ENCODE measurements at regions of chr4 and their contacts with region 1.

Region 1: DNA sequence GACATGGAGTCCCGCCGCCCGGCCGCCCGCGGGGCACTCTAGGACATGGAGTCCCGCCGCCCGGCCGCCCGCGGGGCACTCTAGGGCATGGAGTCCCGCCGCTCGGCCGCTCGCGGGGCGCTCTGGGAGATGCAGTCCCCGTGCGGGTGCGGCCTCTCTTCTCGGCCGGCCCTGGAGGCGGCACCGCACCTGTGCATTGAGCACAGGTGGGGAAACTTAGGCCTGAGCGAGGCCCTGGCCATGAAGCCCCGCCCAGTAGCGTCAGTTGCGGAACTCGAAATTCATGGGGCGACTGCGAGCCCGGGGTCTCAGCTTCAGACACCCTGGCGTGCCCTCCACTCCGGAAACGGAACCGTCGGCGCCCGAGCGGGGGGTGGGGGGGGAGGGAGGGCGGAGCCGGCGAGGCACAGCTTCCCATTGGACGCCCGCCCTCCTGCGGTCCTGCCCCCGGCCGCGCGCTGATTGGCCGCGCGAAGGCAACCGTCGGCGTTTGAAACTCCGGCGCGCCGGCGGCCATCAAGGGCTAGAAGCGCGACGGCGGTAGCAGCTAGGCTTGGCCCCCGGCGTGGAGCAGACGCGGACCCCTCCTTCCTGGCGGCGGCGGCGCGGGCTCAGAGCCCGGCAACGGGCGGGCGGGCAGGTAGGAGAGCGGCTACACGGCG is at the starts of genes TACC3 and TMEM129:
- DNase-seq: peak; percentile 98
- H3K4me3 Mint-ChIP-seq: peak within 1 kb of the TSS; percentile 98
- H3K27ac Mint-ChIP-seq: peak within 1 kb of the TSS; percentile 99
- H3K4me1 Mint-ChIP-seq: peaks cover 40% of the 10 kb centered on the region
- H3K27me3 Mint-ChIP-seq: no peaks in the 10 kb centered on the region
- total RNA-seq, gene TACC3: 134 and 142 TPM in 2 replicates
- total RNA-seq, gene TMEM129: 26.6 and 27.8 TPM in 2 replicates

Region 2: DNA sequence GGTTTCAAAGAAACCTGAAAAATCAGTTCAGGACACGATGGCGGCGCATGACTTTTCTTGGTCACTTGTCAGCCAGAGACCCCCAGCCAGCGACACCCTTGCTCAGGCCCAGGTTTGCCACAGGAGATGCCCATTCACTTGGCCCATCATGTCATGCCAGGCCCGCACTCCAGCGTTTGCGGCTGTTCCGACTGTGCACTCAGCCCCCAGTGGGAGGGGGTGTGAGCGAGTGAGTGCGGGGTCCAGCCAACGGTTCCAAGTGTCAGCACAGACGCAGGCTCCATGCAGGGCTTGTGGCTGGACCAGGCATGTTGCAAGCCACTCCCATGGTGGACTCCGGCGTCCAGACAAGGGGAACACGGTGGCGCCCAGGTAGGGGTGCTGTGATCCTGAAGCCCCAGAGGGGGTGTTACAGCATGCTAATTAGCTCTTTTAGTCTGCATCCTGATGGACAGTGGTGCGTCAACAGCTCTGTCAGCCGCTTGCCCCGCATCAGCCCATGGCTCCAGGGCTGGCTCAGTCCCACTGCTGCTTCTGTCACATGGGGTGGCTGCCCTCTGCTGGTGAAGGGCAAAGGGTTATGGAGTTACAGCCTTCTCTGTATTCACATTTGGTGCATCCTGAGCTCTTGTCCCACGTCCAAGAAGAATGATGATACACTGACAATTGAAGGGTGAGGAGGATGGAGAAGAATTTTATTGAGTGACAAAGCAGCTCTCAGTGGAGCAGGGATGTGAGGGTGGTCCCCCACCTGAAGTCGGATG is 435.2 kb before region 1 on chr4:
- intact Hi-C with region 1: no loop called
- DNase-seq: peak; percentile 83
- H3K4me3 Mint-ChIP-seq: no peak overlapping the region
- H3K27ac Mint-ChIP-seq: no peak overlapping the region
- H3K4me1 Mint-ChIP-seq: peaks cover 8% of the 10 kb centered on the region
- H3K27me3 Mint-ChIP-seq: no peaks in the 10 kb centered on the region

Region 3: DNA sequence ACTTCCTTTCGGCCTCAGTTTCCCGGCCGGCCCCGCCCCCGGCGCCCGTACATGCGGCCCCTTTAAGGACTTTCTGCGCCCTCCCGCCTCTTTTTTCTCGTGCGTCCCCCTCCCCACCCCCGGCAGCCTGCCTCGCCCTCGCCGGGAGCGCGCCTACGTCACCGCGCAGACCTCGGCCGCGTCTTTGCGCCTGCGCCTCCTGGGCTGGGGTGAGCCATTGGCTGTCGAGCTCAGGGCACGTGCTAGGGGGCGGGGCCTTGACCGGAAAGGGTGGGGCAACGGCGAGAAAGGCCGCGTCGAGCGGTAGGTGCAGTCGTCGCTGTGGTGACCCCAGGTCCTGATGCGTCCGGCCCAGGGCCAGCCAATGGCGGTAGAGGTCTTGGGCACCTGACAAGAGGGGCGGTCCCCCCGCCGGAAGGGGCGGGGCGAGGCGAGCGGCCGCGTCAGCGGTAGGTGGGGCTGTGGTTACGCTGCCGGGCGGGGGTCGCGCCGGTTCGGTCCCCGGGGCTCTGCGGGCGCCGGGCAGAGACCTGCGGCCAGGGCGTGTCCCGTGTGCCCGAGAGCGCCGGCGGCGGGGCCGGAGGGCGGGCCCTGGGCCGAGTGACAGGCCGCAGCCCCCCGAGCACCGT is 374.2 kb before region 1 on chr4 and contains the start of gene UVSSA:
- intact Hi-C with region 1: loop called (anchors 2 kb)
- DNase-seq: peak; percentile 100
- H3K4me3 Mint-ChIP-seq: peak within 1 kb of the TSS; percentile 98
- H3K27ac Mint-ChIP-seq: peak within 1 kb of the TSS; percentile 94
- H3K4me1 Mint-ChIP-seq: peaks cover 35% of the 10 kb centered on the region
- H3K27me3 Mint-ChIP-seq: no peaks in the 10 kb centered on the region
- total RNA-seq, gene UVSSA: 28.3 and 28.4 TPM in 2 replicates

Region 4: GRCh38 chr4:1683736-1684505 is 37.2 kb before region 1 on chr4 and contains the start of gene FAM53A:
- intact Hi-C with region 1: loop called (anchors 2 kb)
- DNase-seq: no peak
- H3K4me3 Mint-ChIP-seq: peak within 1 kb of the TSS; percentile 83
- H3K27ac Mint-ChIP-seq: peak within 1 kb of the TSS; percentile 88
- H3K4me1 Mint-ChIP-seq: peaks cover 12% of the 10 kb centered on the region
- H3K27me3 Mint-ChIP-seq: peaks cover 2% of the 10 kb centered on the region
- total RNA-seq, gene FAM53A: 3.5 and 4.0 TPM in 2 replicates

Region 5: GRCh38 chr4:1842993-1843448 is 121.9 kb after region 1 on chr4:
- intact Hi-C with region 1: no loop called
- DNase-seq: no peak
- H3K4me3 Mint-ChIP-seq: no peak overlapping the region
- H3K27ac Mint-ChIP-seq: no peak overlapping the region
- H3K4me1 Mint-ChIP-seq: peaks cover 8% of the 10 kb centered on the region
- H3K27me3 Mint-ChIP-seq: no peaks in the 10 kb centered on the region

Region 6: DNA sequence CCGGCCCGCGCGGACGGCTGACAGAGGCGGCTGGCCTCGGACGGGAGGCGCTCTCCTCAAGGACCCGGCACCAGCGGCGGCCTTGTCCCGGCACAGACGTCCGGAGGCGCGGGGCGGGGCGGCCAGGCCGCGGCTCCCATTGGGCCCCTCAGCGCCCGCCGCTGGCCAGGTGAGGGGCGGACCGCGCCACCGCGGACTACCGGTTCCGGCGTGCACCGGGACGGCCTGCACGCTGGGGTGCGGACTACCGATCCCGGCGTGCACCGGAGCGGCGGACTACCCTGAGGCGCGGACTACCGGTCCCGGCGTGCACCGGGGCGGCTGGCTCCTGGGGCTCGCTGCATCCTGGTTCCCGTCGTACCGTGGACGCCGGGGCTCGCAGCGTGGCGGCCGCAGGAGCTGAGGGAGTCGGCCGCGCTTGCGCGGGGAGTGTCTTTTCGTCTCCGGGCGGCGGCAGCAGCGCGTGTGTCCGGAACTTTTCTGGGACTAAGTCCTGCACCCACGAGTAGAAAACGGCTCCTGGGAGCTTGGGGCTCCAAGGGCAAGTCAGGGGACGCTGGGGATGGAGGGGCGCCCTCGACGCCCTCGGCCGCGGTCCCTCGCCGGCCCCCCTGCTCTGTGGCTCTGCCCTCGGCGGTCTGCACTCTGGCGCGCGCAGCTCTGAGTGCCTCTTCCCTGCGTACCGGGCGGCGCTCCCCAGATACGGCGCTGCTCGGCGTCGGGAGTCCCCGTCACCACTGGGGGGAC is 135.1 kb after region 1 on chr4 and contains the start of gene LETM1:
- intact Hi-C with region 1: loop called (anchors 2 kb)
- DNase-seq: peak; percentile 99
- H3K4me3 Mint-ChIP-seq: peak within 1 kb of the TSS; percentile 90
- H3K27ac Mint-ChIP-seq: peak within 1 kb of the TSS; percentile 82
- H3K4me1 Mint-ChIP-seq: peaks cover 25% of the 10 kb centered on the region
- H3K27me3 Mint-ChIP-seq: no peaks in the 10 kb centered on the region
- total RNA-seq, gene LETM1: 97.2 and 98.7 TPM in 2 replicates